ENCODE measurements at regions of chr3 and their contacts with region 1.

Region 1: DNA sequence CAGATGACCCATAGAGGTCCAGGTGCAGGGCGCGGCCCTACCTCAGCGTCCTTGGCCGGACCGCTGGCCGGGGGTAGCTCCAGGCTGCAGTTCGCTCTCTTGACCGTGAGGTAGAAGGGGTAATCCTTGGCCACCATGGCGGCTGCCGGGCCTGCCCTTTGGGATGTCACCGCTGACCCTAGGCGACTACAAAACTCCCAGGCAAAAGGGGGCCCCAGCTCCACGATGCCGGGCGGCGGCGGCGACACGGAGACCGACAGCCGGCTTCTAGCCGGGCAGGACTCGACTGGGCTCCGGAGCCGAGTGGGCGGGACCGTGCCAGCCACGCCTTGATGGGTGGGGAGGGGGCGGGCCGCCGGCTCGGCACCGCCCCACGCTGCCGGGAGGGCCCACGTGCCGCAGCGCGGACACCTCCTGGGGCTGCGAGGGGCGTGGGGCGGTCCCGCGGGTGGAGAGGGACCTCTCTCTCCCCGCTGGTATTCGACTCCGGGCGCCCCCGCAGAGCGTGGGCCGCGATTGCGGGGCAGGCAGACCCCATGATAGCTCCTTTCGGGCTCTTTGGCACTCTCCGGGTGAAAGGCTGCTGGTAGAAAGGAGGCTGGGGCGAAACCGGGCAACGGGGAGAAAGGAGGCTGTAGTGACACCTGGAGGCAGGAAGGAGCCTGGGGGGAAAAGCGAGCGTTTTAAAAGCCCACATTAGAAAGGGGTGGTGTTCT is at the start of gene ARHGEF3:
- DNase-seq: peak; percentile 88
- H3K4me3 ChIP-seq: peak within 1 kb of the TSS; percentile 49 to 77 (median 57)
- H3K27ac ChIP-seq: peak within 1 kb of the TSS; percentile 65 to 82 (median 75)
- H3K4me1 ChIP-seq: peaks cover 13 to 37% (median 20%) of the 10 kb centered on the region in 4 donors
- H3K27me3 ChIP-seq: no peaks in the 10 kb centered on the region
- CTCF ChIP-seq: peak in 4 of 5 experiments; percentile 28 to 38 (median 36)
- EP300 ChIP-seq: no peak
- POLR2A ChIP-seq: peak; percentile 76
- total RNA-seq, gene ARHGEF3: 2.6 to 13.2 (median 5.6) TPM

Region 2: DNA sequence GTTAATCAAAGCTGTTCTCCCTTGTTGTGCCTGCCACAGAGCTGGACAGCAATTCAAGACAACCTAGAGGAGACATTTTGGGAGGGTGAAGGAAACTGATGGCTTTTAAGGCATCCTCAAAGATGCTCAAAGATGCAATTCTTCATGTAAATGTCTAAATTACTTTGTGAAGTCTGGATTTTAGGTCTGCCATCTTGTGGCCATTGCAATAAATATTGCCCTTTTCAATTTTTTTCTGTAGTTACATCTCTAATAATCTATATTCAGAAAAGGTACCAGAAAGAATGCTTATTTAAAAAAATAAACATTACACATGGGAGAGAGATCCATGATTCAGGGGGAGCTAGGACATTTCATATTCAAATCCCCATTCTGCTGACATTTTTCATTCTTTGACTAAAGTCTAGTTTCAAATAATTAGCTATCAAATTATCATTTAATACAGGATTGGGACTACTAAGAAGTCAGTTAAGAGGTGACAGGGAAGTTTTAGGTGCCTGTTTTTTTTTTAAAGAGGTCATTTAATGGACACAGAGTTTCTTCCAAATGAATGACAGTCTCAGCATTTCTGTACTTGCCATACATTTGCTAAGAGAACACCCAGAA is 1054.9 kb before region 1 on chr3:
- in situ Hi-C with region 1: no loop called
- intact Hi-C with region 1: no loop called
- DNase-seq: no peak
- H3K4me3 ChIP-seq: no peak overlapping the region
- H3K27ac ChIP-seq: no peak overlapping the region
- H3K4me1 ChIP-seq: peaks cover 0 to 3% (median 0%) of the 10 kb centered on the region in 4 donors
- H3K27me3 ChIP-seq: no peaks in the 10 kb centered on the region
- CTCF ChIP-seq: peak in 4 of 5 experiments; percentile 15 to 39 (median 27)
- EP300 ChIP-seq: no peak
- POLR2A ChIP-seq: no peak

Region 3: GRCh38 chr3:56702490-56703315 is 99.1 kb before region 1 on chr3:
- in situ Hi-C with region 1: loop called (anchors 5 to 10 kb)
- intact Hi-C with region 1: loop called (anchors 2 kb)
- DNase-seq: peak; percentile 37
- H3K4me3 ChIP-seq: no peak overlapping the region
- H3K27ac ChIP-seq: no peak overlapping the region
- H3K4me1 ChIP-seq: peaks cover 0 to 4% (median 0%) of the 10 kb centered on the region in 4 donors
- H3K27me3 ChIP-seq: no peaks in the 10 kb centered on the region
- CTCF ChIP-seq: peak; percentile 80 to 90 (median 88)
- EP300 ChIP-seq: no peak
- POLR2A ChIP-seq: no peak

Region 4: GRCh38 chr3:56758539-56758981 is 43.3 kb before region 1 on chr3:
- in situ Hi-C with region 1: no loop called
- intact Hi-C with region 1: no loop called
- DNase-seq: no peak
- H3K4me3 ChIP-seq: no peak overlapping the region
- H3K27ac ChIP-seq: peak overlapping the region; percentile 38 to 58 (median 55)
- H3K4me1 ChIP-seq: peaks cover 0 to 22% (median 13%) of the 10 kb centered on the region in 4 donors
- H3K27me3 ChIP-seq: no peaks in the 10 kb centered on the region
- CTCF ChIP-seq: no peak
- EP300 ChIP-seq: no peak
- POLR2A ChIP-seq: no peak

Region 5: GRCh38 chr3:57094575-57094974 is 292.8 kb after region 1 on chr3:
- in situ Hi-C with region 1: no loop called
- intact Hi-C with region 1: loop called (anchors 5 kb)
- DNase-seq: no peak
- H3K4me3 ChIP-seq: no peak overlapping the region
- H3K27ac ChIP-seq: no peak overlapping the region
- H3K4me1 ChIP-seq: peaks cover 0 to 13% (median 3%) of the 10 kb centered on the region in 4 donors
- H3K27me3 ChIP-seq: no peaks in the 10 kb centered on the region
- CTCF ChIP-seq: no peak
- EP300 ChIP-seq: no peak
- POLR2A ChIP-seq: no peak

Measured in transverse colon (tissue), 4 donors.